Ascending aorta (tissue), 2 donors: ENCODE measurements at regions of chr3 and their contacts with region 1.

Region 1: DNA sequence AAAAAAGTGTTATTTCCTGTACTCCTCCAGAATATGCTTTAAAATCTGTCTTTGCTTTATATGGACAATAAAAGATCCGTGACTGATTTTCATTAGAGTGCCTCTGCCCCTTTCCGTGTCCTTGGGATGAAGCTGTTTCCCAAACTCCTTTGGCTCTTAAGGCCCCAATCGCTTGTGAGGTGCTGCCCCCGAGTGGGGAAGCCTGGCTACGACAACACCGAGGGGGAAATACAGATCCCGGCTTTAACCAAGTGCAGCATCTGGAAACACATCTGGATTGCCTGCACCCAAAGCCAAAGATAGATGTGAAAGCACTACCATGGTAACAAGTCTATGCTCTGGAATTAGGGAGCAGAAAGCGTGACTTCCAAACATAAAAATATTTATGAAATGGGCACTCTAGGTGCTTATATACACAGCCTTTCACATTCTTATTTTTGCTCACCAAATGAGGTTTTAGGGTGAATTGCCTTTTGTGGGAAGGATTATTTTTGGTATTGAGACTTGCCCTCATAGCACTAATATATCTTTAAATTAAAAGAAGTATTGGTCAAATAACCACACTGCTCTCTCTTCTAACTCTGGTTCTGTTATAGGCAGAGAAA is 40.6 kb upstream of the ADCY5 start:
- DNase-seq: peak in 1 of 2 donors; percentile 86
- H3K4me3 ChIP-seq: peak overlapping the region in 1 of 2 donors; percentile 32
- H3K27ac ChIP-seq: peak overlapping the region; percentile 76
- H3K4me1 ChIP-seq: peaks cover 0 to 14% of the 10 kb centered on the region in 2 donors
- H3K27me3 ChIP-seq: no peaks in the 10 kb centered on the region
- CTCF ChIP-seq: peak; percentile 88 to 96 (median 92)

Region 2: GRCh38 chr3:123431658-123432324 is 57.7 kb before region 1 on chr3:
- intact Hi-C with region 1: no loop called
- DNase-seq: no peak
- H3K4me3 ChIP-seq: no peak overlapping the region
- H3K27ac ChIP-seq: peak overlapping the region; percentile 79 to 86
- H3K4me1 ChIP-seq: peaks cover 11 to 34% of the 10 kb centered on the region in 2 donors
- H3K27me3 ChIP-seq: no peaks in the 10 kb centered on the region
- CTCF ChIP-seq: no peak

Region 3: DNA sequence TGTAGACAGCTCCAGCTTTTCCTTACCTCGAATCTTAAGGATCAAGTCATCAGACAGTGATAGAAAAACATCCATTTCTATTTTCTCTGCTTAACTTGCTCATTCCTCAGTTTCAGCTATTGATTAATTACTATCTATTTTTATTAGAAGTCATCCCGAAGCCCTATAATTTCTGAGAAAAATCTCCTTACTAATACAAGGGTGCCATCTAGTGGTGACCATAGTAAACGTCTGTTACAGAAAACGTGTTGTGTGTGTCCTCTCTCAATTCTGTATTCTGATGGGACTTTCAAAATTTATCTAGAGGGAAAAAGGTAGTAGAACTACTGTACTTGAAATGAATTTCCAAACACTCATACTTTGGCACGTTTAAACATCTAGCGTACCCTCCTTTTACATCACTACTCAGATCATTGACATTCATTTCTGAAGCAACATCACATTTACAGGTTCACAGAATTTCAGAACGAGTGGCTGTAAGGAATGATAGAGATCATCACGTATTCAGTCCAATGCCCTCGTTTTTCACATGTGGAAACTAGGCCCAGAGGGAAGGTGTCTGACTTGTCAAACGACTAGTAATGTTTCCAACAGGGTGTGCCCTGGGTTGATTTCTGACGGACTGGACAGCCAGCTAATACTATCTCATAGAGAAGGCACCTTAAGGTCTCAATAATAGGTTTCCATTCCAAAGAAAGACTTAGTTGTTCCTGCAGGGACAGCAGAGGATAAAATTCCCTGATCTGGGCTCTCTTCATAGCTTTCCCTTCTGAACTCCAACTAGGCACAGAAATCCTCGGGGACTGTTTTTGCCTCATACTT is 69.7 kb after region 1 on chr3:
- intact Hi-C with region 1: loop called (anchors 2 kb)
- DNase-seq: no peak
- H3K4me3 ChIP-seq: no peak overlapping the region
- H3K27ac ChIP-seq: no peak overlapping the region
- H3K4me1 ChIP-seq: no peaks in the 10 kb centered on the region
- H3K27me3 ChIP-seq: no peaks in the 10 kb centered on the region
- CTCF ChIP-seq: peak; percentile 66 to 81 (median 80)